Transverse colon (tissue), 4 donors: ENCODE measurements at regions of chr7 and their contacts with region 1.

Region 1: DNA sequence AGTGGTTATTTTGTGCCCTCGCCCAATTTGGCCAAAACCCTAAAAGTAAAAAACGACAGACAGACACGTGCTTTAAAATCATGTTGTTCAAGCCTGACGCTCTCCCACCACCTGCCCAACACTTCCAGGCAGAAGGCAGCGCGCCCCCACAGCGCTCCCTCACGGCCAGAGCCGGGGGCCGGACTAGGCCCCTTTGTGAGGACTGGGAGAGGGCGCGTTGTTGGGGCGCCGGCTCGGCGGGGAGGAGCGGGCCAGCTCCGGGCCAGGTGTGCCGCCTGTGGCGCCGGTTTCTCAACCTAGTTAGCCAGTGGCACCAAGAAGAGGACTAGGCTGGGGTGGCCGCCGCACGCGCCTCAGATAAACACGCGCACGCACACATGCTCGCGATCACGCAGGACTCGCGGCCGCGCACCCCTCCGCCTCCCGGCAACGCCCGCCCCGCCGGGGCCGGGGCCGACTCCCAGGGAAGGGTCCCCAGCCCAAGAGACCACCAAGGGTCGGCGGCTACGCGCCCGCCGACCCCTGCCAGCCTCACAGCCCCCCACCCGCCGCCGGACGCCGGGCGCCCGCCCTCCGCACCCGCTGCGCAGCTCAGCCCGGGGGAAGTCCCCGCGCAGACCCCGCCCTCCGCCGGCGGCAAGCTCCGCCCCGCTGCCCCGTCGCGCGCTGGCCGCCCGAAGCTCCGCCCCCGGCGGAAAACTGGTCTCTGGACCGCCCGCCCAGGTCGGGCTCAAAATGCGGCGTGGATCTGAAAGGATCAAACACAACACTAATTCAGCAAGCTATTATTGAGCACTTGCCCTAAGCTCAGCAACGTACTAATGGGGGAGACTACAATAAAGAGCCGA is at the start of gene IMMP2L:
- DNase-seq: peak; percentile 92
- H3K4me3 ChIP-seq: peak within 1 kb of the TSS; percentile 78 to 94 (median 87)
- H3K27ac ChIP-seq: peak within 1 kb of the TSS; percentile 86 to 92 (median 87)
- H3K4me1 ChIP-seq: peaks cover 0 to 28% (median 16%) of the 10 kb centered on the region in 4 donors
- H3K27me3 ChIP-seq: no peaks in the 10 kb centered on the region
- CTCF ChIP-seq: peak in 2 of 5 experiments; percentile 24 to 27
- EP300 ChIP-seq: no peak
- POLR2A ChIP-seq: peak; percentile 49
- total RNA-seq, gene IMMP2L: 8.6 to 69.6 (median 10.9) TPM

Region 2: DNA sequence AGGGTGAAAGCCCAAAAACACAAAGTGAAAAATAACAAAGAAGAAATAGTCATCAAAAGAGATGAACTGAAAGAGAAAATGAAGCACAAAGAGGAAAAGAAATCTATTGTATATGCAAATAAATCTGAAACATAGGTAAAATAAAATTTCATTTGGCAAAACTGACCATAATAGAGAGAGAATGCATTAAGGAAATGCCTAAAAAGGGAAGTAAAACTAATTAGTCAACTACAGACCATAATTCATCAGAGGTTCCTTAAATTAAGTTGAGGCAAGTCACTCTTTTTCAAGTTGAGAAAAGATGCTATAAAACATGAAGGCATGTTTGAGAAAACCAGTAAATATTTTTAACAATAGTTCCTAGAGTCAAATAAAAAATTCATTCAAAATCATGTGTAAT is 237.9 kb before region 1 on chr7:
- in situ Hi-C with region 1: no loop called
- intact Hi-C with region 1: no loop called
- DNase-seq: no peak
- H3K4me3 ChIP-seq: no peak overlapping the region
- H3K27ac ChIP-seq: no peak overlapping the region
- H3K4me1 ChIP-seq: no peaks in the 10 kb centered on the region
- H3K27me3 ChIP-seq: no peaks in the 10 kb centered on the region
- CTCF ChIP-seq: no peak
- EP300 ChIP-seq: no peak
- POLR2A ChIP-seq: no peak

Region 3: DNA sequence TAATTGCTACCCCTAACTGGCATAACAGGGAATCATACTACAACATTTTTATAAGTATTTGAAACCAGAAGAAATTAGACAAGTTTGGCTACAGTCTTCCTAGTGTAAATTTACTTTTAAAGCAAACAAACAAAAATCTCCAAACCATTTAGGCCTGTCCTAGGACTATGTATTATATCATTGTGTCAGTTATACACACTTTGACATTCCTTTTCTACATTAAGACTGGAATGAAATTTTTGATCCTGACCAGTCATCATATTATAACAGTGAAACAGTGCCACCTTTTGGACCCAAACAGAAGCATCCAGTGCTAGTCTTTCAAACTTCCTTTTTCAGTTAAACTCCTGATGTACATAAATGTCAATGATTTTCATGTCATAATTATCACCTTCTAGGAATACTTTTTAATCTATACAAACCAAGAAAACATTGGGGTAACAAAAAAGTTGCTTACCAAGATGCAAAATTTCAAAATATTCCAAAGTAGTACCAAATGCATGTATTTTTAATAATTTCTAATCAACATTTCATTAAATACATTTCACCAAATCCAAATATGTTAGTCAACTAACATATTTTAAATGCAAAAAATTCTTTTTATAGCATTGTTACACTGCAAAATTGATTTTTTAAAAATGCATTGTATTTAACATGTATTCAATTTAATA is 75.5 kb before region 1 on chr7:
- in situ Hi-C with region 1: no loop called
- intact Hi-C with region 1: no loop called
- DNase-seq: no peak
- H3K4me3 ChIP-seq: no peak overlapping the region
- H3K27ac ChIP-seq: no peak overlapping the region
- H3K4me1 ChIP-seq: no peaks in the 10 kb centered on the region
- H3K27me3 ChIP-seq: no peaks in the 10 kb centered on the region
- CTCF ChIP-seq: peak; percentile 46 to 64 (median 63)
- EP300 ChIP-seq: no peak
- POLR2A ChIP-seq: no peak

Region 4: GRCh38 chr7:113085781-113086390 is 1523.8 kb after region 1 on chr7:
- in situ Hi-C with region 1: no loop called
- intact Hi-C with region 1: no loop called
- DNase-seq: no peak
- H3K4me3 ChIP-seq: peak overlapping the region in 1 of 4 donors; percentile 48
- H3K27ac ChIP-seq: no peak overlapping the region
- H3K4me1 ChIP-seq: peaks cover 0 to 4% (median 0%) of the 10 kb centered on the region in 4 donors
- H3K27me3 ChIP-seq: peaks cover 14% of the 10 kb centered on the region
- CTCF ChIP-seq: no peak
- EP300 ChIP-seq: no peak
- POLR2A ChIP-seq: no peak

Region 5: GRCh38 chr7:113118074-113118959 is 1556.2 kb after region 1 on chr7 and contains the start of gene SMIM30:
- in situ Hi-C with region 1: no loop called
- intact Hi-C with region 1: loop called (anchors 10 kb)
- DNase-seq: peak; percentile 93
- H3K4me3 ChIP-seq: peak within 1 kb of the TSS; percentile 46 to 65 (median 47)
- H3K27ac ChIP-seq: peak within 1 kb of the TSS; percentile 47 to 71 (median 64)
- H3K4me1 ChIP-seq: peaks cover 0 to 12% (median 4%) of the 10 kb centered on the region in 4 donors
- H3K27me3 ChIP-seq: no peaks in the 10 kb centered on the region
- CTCF ChIP-seq: no peak
- EP300 ChIP-seq: no peak
- POLR2A ChIP-seq: peak; percentile 65
- total RNA-seq, gene SMIM30: 4.6 to 36.0 (median 30.1) TPM